ENCODE measurements at regions of chr4 and their contacts with region 1.

Region 1: GRCh38 chr4:168841000-168841671 is 168.9 kb downstream of the CBR4 start:
- DNase-seq: peak in 1 of 2 experiments; percentile 61
- H3K4me3 ChIP-seq: peak overlapping the region in 3 of 4 experiments; percentile 6 to 42 (median 14); a peak in 2 of 8 replicates
- H3K27ac ChIP-seq: peak overlapping the region; percentile 58; the same call in 1 of the 2 replicates
- H3K4me1 ChIP-seq: peaks cover 5 to 32% (median 18%) of the 10 kb centered on the region in 4 experiments
- H3K27me3 ChIP-seq: no peaks in the 10 kb centered on the region
- CTCF ChIP-seq: no peak
- EP300 ChIP-seq: peak in 1 of 2 experiments; percentile 97; a peak in 1 of 3 replicates
- POLR2A ChIP-seq: no peak
- RAD21 ChIP-seq: no peak

Region 2: DNA sequence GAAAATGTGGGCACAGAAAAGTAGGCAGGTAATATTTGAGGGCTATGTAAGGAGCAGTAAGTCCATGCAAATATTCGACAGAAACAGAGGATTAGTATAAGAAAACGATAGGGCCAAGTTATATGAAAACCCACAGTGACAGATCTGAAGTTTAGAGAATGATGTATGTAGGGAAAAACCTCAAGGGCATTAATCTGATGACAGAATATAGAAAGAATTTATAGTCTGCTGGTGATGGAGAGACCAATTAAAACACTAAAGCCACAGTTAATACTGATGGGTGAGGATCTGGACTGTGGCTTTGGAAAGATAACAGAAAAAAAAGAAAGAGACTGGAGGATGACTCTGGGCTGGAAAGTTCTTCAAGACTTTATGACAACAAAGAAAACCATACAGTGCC is 174.6 kb before region 1 on chr4:
- CTCF ChIA-PET with region 1: no interaction called
- POLR2A ChIA-PET with region 1: no interaction called
- DNase-seq: no peak
- H3K4me3 ChIP-seq: no peak overlapping the region
- H3K27ac ChIP-seq: no peak overlapping the region
- H3K4me1 ChIP-seq: peaks cover 0 to 2% (median 0%) of the 10 kb centered on the region in 4 experiments; a peak in 1 of 7 replicates
- H3K27me3 ChIP-seq: no peaks in the 10 kb centered on the region
- CTCF ChIP-seq: no peak
- EP300 ChIP-seq: no peak
- POLR2A ChIP-seq: no peak
- RAD21 ChIP-seq: no peak

Region 3: DNA sequence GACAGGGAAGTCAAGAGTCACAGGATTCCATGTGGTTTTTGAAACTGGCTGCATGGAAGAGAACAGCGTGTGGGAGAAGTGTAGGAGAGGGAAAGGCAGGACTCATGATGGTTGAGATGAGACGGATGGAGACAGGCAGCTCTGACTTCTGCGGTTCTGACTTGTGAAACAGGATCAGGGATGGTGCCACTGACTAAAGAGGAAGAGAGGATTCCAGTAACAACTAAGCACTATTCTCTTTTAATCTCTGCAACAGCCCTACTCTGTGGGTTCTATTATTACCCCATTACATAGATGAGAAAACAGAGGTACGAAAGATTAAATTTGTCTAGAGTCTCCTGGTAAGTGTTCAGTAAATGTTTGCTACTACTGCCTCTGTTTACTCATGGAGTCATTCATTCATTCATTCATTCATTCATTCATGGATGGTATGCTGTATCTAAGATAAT is 12.7 kb after region 1 on chr4:
- CTCF ChIA-PET with region 1: interaction called, 5 read pairs
- POLR2A ChIA-PET with region 1: interaction called, 11 read pairs
- DNase-seq: no peak
- H3K4me3 ChIP-seq: no peak overlapping the region
- H3K27ac ChIP-seq: no peak overlapping the region
- H3K4me1 ChIP-seq: peaks cover 3 to 11% (median 3%) of the 10 kb centered on the region in 4 experiments; a peak in 6 of 7 replicates
- H3K27me3 ChIP-seq: no peaks in the 10 kb centered on the region
- CTCF ChIP-seq: no peak
- EP300 ChIP-seq: no peak
- POLR2A ChIP-seq: no peak
- RAD21 ChIP-seq: no peak

Region 4: DNA sequence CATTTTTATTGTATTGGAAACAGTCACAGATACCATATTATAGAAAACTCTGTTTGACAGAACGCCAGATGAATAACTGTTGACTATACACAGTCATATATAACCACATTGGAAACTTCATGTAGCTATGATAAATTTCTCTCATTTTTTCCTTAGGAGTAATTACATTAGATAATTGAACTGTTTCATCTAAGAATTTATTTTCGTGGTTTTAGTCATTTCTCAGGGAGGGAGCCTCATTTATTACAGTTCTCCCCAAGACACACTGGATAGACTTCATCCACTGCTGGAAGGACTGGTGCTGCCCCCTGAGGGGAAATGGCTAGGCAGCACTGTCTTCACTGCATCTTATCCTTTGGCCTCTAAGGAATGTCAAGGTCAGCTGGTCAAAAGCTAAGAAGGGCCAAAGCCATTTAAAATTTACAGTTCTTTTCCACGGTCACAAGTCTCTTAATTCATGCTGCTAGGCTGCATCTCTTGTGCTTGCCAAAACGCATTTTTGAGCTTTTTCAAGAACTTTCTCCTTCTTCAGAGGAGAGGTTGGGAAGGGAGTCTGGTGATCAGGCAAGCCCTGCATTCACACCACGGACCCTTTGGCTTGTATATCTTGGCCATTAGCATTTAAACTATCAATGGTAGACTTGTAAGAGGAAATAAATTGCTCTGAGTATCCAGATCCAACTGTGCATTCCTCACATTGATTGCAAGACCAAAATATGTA is 23.8 kb after region 1 on chr4:
- CTCF ChIA-PET with region 1: interaction called, 10 read pairs
- POLR2A ChIA-PET with region 1: interaction called, 8 read pairs
- DNase-seq: no peak
- H3K4me3 ChIP-seq: no peak overlapping the region
- H3K27ac ChIP-seq: no peak overlapping the region
- H3K4me1 ChIP-seq: peaks cover 0 to 8% (median 4%) of the 10 kb centered on the region in 4 experiments; a peak in 2 of 7 replicates
- H3K27me3 ChIP-seq: no peaks in the 10 kb centered on the region
- CTCF ChIP-seq: peak; percentile 48 to 64 (median 63)
- EP300 ChIP-seq: no peak
- POLR2A ChIP-seq: no peak
- RAD21 ChIP-seq: peak; percentile 67 to 72